IMR-90 (cell line): ENCODE measurements at regions of chr5 and their contacts with region 1.

Region 1: DNA sequence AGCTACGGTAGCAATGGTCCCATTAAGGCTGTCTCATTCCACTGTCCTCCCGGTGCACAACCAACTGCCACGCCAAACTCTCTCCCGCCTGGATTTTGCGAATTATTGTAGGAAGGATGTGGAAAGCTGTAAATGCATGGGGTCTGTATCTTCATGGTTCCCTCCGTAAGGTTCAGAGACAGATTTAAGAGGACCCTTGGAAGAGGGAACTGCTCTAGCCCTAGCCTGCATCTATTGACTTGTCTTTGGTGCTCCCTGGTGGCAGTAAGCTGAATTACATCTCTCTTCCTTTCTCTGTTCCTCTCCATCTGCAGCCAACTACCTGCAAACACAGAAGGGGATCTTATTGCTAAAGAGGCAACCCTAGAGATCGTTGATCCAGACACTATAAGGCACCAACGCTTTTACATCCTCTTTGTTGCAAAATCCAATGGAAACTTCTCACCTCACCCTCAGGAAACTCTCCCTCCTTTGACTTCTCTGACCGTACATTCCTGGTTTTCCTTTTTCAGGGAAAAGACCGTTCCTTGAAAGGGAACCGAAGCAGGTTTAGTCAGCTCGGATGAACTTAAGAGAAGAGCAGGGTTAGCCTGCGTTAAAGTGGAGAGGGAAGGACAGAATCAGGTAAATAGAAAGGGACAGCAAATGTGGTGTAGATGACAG is 11.9 kb downstream of the CAPSL start:
- DNase-seq: peak; percentile 50
- ATAC-seq: peak; percentile 61
- H3K4me3 ChIP-seq: no peak overlapping the region
- H3K27ac ChIP-seq: no peak overlapping the region
- H3K4me1 ChIP-seq: peaks cover 3% of the 10 kb centered on the region; the same call in 1 of the 2 replicates
- H3K27me3 ChIP-seq: no peaks in the 10 kb centered on the region
- CTCF ChIP-seq: peak; percentile 82
- POLR2A ChIP-seq: no peak
- RAD21 ChIP-seq: peak; percentile 94

Region 2: DNA sequence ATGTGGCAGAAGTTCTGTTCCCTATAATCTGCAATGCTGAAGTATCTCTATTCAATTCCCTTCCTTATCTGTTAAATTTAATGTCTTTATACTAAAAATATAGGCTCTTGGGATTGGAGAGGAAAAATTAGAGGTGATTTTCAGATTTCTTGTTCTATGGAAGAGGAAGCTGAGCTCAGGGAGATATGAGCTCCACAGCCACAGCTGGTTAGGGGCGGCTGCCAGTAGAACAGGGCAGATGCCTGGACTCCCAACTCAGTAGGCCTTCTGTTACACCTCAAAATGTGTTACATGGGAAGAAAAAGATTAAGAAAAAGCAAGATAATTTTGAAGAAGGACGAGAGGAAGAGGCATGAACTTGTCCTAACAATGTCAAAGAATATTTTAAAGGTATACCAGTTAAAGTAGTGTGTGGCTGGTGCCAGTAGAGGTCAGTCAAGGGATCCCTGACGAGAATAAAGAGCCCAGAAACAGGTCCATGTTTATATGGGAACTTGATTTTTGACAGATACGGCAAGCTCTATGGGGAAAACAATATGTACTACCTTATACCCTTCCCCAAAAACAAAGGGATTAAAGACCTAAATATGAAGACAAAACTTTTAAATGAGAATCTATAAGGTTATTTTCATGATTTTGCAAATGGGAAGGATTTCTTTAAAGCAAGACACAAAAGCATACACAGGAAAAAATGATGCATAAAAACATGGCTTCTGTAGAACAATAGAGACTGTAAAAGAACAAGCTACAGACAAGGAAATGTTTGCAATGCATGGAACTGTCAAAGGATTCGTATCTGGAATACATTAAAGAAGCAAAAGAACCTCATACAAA is 968.4 kb before region 1 on chr5:
- CTCF ChIA-PET with region 1: no interaction called
- POLR2A ChIA-PET with region 1: no interaction called
- dilution Hi-C with region 1: no loop called
- in situ Hi-C with region 1: no loop called
- intact Hi-C with region 1: loop called (anchors 5 kb)
- DNase-seq: peak; percentile 36
- ATAC-seq: peak; percentile 87
- H3K4me3 ChIP-seq: no peak overlapping the region
- H3K27ac ChIP-seq: 0 out of 2 replicates have a peak overlapping the region, but pooled peaks have one; percentile 33
- H3K4me1 ChIP-seq: peaks cover 5% of the 10 kb centered on the region
- H3K27me3 ChIP-seq: no peaks in the 10 kb centered on the region
- CTCF ChIP-seq: peak; percentile 66
- POLR2A ChIP-seq: no peak
- RAD21 ChIP-seq: peak; percentile 65

Region 3: GRCh38 chr5:35182541-35183535 is 743.7 kb before region 1 on chr5:
- CTCF ChIA-PET with region 1: no interaction called
- POLR2A ChIA-PET with region 1: no interaction called
- dilution Hi-C with region 1: no loop called
- in situ Hi-C with region 1: no loop called
- intact Hi-C with region 1: loop called (anchors 5 kb)
- DNase-seq: peak; percentile 60
- ATAC-seq: peak; percentile 81
- H3K4me3 ChIP-seq: no peak overlapping the region
- H3K27ac ChIP-seq: no peak overlapping the region
- H3K4me1 ChIP-seq: no peaks in the 10 kb centered on the region
- H3K27me3 ChIP-seq: peaks cover 20% of the 10 kb centered on the region
- CTCF ChIP-seq: peak; percentile 75
- POLR2A ChIP-seq: no peak
- RAD21 ChIP-seq: peak; percentile 80

Region 4: DNA sequence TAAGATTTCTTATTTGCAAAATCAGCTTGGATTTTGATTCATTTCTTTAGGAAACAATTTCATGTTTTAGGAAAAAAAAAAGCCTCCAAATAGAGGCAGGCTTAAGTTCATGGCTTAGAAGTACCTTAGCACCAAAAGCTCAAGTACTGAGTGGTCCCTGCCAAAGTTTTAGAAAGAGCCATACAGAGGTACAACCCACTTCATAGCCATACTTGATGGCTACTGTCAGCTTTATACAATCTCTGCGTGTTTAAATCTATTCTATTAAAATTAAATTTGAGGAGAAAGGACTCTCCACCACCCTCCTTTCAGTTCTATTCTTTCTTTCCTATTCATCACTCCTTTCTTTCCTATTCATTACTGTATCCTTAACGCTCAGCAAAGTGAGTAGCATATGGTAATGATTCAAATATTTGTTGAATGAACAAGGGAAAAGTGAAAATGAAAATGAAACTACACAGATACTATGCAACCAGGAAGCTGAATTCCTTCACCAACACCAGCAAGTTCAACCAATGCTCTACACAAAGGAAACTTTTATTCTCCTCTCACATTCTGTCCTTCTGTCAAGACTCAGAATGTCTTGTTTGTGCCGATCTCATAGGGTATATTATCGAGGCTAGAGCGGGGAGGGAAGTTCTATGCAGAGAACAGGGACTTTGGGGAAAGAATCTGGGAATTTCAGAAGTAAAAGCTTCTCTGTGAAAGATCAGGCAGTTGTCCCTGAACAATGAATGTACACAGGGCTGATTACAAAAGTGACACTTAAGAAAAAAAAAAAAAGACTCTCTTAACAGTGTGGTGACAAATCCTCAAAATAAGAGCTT is 447.5 kb before region 1 on chr5:
- CTCF ChIA-PET with region 1: no interaction called
- POLR2A ChIA-PET with region 1: no interaction called
- dilution Hi-C with region 1: no loop called
- in situ Hi-C with region 1: no loop called
- intact Hi-C with region 1: loop called (anchors 5 kb)
- DNase-seq: peak; percentile 39
- ATAC-seq: peak; percentile 89
- H3K4me3 ChIP-seq: peak overlapping the region; percentile 63
- H3K27ac ChIP-seq: peak overlapping the region; percentile 76; the same call in 1 of the 2 replicates
- H3K4me1 ChIP-seq: no peaks in the 10 kb centered on the region
- H3K27me3 ChIP-seq: no peaks in the 10 kb centered on the region
- CTCF ChIP-seq: no peak
- POLR2A ChIP-seq: no peak
- RAD21 ChIP-seq: no peak

Region 5: DNA sequence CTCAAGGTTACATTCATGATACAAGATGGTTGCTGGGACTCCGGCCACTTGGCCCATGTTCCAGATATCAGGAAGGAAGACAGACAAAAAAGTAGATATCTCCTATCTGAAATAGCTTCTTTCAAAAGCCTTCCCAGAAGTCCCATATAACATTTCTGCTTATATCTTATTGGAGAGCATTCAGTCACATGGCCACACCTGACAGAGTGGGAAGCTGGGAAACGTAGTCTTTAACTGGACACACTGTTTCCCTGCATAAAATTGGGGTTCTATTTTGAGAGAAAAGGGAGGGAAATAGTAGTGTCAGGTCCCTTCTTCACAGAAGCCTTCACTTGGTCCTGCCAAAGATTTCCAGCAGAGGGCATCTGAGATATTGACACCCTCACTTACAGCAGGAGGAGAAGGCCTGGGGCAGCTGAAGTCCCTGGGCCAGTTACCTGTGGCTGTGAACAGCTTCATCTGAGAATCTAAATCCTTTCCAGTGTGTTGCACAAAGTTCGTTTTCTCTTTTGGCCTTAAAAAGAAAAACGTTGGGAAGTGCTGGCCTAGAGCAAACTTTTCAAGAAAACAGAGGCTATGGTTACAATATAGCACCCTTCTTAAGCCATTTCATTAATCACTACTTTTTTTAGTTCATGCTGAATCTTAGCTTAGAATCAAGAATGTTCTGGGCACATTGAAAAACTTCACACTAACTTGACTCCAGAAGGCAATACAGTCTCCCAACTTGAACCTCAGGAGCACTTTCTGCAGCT is 275.3 kb before region 1 on chr5:
- CTCF ChIA-PET with region 1: interaction called, 27 read pairs
- POLR2A ChIA-PET with region 1: no interaction called
- dilution Hi-C with region 1: no loop called
- in situ Hi-C with region 1: loop called (anchors 5 kb)
- intact Hi-C with region 1: loop called (anchors 1 kb)
- DNase-seq: peak; percentile 57
- ATAC-seq: peak; percentile 92
- H3K4me3 ChIP-seq: no peak overlapping the region
- H3K27ac ChIP-seq: no peak overlapping the region
- H3K4me1 ChIP-seq: peaks cover 2% of the 10 kb centered on the region; the same call in 1 of the 2 replicates
- H3K27me3 ChIP-seq: no peaks in the 10 kb centered on the region
- CTCF ChIP-seq: peak; percentile 63
- POLR2A ChIP-seq: no peak
- RAD21 ChIP-seq: peak; percentile 73

Region 6: GRCh38 chr5:35777358-35778087 is 149.0 kb before region 1 on chr5:
- CTCF ChIA-PET with region 1: interaction called, 8 read pairs
- POLR2A ChIA-PET with region 1: no interaction called
- dilution Hi-C with region 1: no loop called
- in situ Hi-C with region 1: loop called (anchors 5 kb)
- intact Hi-C with region 1: loop called (anchors 1 kb)
- DNase-seq: peak; percentile 83
- ATAC-seq: peak; percentile 35
- H3K4me3 ChIP-seq: no peak overlapping the region
- H3K27ac ChIP-seq: peak overlapping the region; percentile 10; the same call in 1 of the 2 replicates
- H3K4me1 ChIP-seq: peaks cover 14% of the 10 kb centered on the region
- H3K27me3 ChIP-seq: no peaks in the 10 kb centered on the region
- CTCF ChIP-seq: peak; percentile 54
- POLR2A ChIP-seq: no peak
- RAD21 ChIP-seq: peak; percentile 54; the same call in 1 of the 2 replicates